ENCODE measurements at regions of chr4 and their contacts with region 1.

Region 1: DNA sequence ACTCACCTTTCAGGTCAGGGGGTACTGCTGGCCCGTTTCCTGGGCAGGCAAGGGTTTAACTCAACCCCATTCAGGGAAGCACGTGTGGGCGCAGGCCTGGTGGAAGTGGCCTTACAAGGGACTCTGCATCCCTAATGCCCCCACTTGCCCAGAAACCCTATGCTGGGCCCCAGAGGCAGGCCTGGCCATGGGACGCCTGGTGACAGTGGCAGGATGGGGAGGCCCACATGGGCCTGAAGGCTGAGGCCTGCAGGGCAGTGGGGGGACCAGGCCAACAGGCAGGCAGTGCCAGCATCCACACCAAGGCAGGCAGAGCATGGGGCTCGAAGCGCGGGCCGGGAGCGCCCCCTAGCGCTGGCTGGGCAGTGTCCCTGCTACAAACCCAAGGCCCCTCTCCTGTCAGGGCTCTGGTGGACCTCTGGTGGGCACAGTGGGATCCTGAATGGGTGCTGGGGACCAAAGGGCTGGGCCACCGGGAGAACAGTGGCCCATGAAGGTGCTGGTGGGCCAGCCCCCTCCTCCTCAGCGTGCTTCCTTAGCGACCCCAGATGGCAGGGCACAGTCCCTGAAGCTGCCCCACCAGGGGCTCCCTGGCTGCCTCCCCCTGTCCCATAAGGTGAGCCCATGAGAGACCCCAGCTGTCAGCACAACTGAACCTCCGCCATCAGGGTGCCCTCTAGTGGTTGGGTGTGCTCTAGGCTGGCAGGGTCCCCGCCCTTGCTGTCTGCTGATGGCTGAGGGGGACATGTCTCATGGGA is 16.8 kb downstream of the FGFR3 start:
- DNase-seq: peak; percentile 86
- ATAC-seq: peak; percentile 87
- H3K4me3 ChIP-seq: no peak overlapping the region
- H3K27ac ChIP-seq: peak overlapping the region; percentile 24
- H3K4me1 ChIP-seq: peaks cover 20% of the 10 kb centered on the region
- H3K27me3 ChIP-seq: no peaks in the 10 kb centered on the region
- CTCF ChIP-seq: peak; percentile 94
- EP300 ChIP-seq: no peak
- POLR2A ChIP-seq: no peak
- RAD21 ChIP-seq: peak; percentile 99

Region 2: DNA sequence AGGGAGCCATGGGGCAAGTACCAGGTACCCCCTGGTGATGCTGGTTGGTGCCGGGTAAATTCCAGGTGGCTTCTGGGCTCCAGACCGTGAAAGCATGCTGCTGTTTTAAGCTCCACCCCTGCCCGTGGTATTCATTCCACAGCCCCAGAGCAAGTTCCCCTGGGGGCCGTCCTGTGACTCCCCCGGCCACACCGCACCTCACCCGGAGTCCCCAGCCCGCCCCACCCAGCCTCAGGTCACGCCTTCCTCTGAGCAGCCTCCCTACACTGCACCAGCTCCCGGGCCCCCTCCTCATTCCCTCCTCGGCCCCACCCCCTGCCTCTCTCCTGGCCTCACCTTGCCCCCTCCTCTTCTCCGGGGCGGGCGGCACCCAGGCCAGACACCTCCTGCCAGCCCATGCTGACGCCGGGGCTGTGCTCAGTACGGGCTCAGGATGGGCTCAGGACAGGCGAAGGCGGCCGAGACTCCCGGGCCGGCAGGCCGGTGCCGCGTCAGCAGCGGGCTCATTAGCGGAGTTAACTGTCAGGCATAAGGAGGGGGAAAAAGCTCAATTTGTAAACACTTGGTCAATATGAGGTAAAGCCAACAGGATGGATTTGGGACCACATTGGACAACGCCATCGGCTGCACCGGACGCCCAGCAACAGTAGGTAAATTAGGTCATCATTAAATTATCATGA is 253.3 kb before region 1 on chr4:
- CTCF ChIA-PET with region 1: no interaction called
- POLR2A ChIA-PET with region 1: no interaction called
- in situ Hi-C with region 1: no loop called
- intact Hi-C with region 1: no loop called
- DNase-seq: no peak
- ATAC-seq: no peak
- H3K4me3 ChIP-seq: no peak overlapping the region
- H3K27ac ChIP-seq: no peak overlapping the region
- H3K4me1 ChIP-seq: no peaks in the 10 kb centered on the region
- H3K27me3 ChIP-seq: peaks cover 26 to 86% of the 10 kb centered on the region in 2 experiments
- CTCF ChIP-seq: no peak
- EP300 ChIP-seq: no peak
- POLR2A ChIP-seq: no peak
- RAD21 ChIP-seq: no peak

Region 3: GRCh38 chr4:1746265-1746691 is 63.7 kb before region 1 on chr4:
- CTCF ChIA-PET with region 1: interaction called, 179 read pairs
- POLR2A ChIA-PET with region 1: interaction called, 45 read pairs
- in situ Hi-C with region 1: loop called (anchors 10 kb)
- intact Hi-C with region 1: loop called (anchors 1 kb)
- DNase-seq: peak; percentile 82
- ATAC-seq: peak; percentile 78
- H3K4me3 ChIP-seq: peak overlapping the region; percentile 46 to 75 (median 67)
- H3K27ac ChIP-seq: peak overlapping the region; percentile 76
- H3K4me1 ChIP-seq: peaks cover 68% of the 10 kb centered on the region
- H3K27me3 ChIP-seq: no peaks in the 10 kb centered on the region; a peak in 1 of 5 replicates
- CTCF ChIP-seq: peak; percentile 99
- EP300 ChIP-seq: peak in 1 of 2 experiments; percentile 10; a peak in 1 of 4 replicates
- POLR2A ChIP-seq: no peak
- RAD21 ChIP-seq: peak; percentile 94

Region 4: DNA sequence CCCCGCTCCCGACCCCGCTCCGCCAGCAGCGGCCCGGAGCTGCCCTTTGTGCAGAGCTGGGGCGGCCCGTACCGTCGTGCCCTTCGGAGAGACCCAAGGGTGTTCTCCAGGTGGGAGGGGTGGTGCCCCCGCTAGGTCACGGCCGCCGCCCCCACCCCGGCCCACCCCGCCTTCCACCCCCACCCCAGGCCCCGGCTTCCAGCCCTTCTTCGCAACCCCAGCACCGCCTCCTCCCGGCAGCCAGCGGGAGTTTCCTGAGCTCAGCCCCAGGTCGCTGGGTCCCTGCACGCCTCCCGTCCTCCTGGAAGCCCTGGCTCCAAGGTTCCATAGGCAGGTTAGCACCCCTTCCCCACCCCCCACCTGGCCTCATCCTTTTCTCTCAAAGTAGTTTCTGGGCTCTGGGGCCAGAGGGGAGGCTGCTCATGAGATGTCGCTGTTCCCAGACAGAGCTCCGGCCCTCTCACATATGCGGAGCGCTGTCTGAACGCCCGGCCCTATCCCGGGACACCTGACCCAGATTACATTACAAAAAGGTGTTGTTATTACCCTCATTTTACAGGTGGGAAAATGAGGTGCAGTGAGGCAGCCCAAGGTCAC is 42.1 kb before region 1 on chr4:
- CTCF ChIA-PET with region 1: interaction called, 14 read pairs
- POLR2A ChIA-PET with region 1: interaction called, 29 read pairs
- in situ Hi-C with region 1: no loop called
- intact Hi-C with region 1: loop called (anchors 1 kb)
- DNase-seq: peak; percentile 76
- ATAC-seq: peak; percentile 20
- H3K4me3 ChIP-seq: peak overlapping the region; percentile 51 to 67 (median 59)
- H3K27ac ChIP-seq: peak overlapping the region; percentile 83
- H3K4me1 ChIP-seq: peaks cover 83% of the 10 kb centered on the region
- H3K27me3 ChIP-seq: no peaks in the 10 kb centered on the region
- CTCF ChIP-seq: peak; percentile 71
- EP300 ChIP-seq: no peak
- POLR2A ChIP-seq: no peak
- RAD21 ChIP-seq: no peak; the same call in 1 of the 2 replicates

Region 5: GRCh38 chr4:1784789-1785591 is 24.9 kb before region 1 on chr4:
- CTCF ChIA-PET with region 1: interaction called, 13 read pairs
- POLR2A ChIA-PET with region 1: interaction called, 14 read pairs
- in situ Hi-C with region 1: no loop called
- intact Hi-C with region 1: no loop called
- DNase-seq: peak; percentile 79
- ATAC-seq: peak; percentile 76
- H3K4me3 ChIP-seq: peak overlapping the region; percentile 29 to 62 (median 29); a peak in 5 of 6 replicates
- H3K27ac ChIP-seq: peak overlapping the region; percentile 69
- H3K4me1 ChIP-seq: peaks cover 96% of the 10 kb centered on the region
- H3K27me3 ChIP-seq: peaks cover 2% of the 10 kb centered on the region in 2 experiments; a peak in 3 of 5 replicates
- CTCF ChIP-seq: no peak
- EP300 ChIP-seq: peak in 1 of 2 experiments; percentile 85; a peak in 1 of 4 replicates
- POLR2A ChIP-seq: no peak
- RAD21 ChIP-seq: no peak

Region 6: GRCh38 chr4:1899149-1900086 is 89.5 kb after region 1 on chr4:
- CTCF ChIA-PET with region 1: interaction called, 5 read pairs
- POLR2A ChIA-PET with region 1: no interaction called
- in situ Hi-C with region 1: no loop called
- intact Hi-C with region 1: loop called (anchors 5 kb)
- DNase-seq: peak; percentile 70
- ATAC-seq: peak; percentile 93
- H3K4me3 ChIP-seq: no peak overlapping the region
- H3K27ac ChIP-seq: no peak overlapping the region
- H3K4me1 ChIP-seq: peaks cover 53% of the 10 kb centered on the region
- H3K27me3 ChIP-seq: no peaks in the 10 kb centered on the region
- CTCF ChIP-seq: peak; percentile 93
- EP300 ChIP-seq: no peak
- POLR2A ChIP-seq: no peak
- RAD21 ChIP-seq: peak; percentile 92

Measured in HepG2 (cell line).